ENCODE measurements at regions of chr19 and their contacts with region 1.

Region 1: DNA sequence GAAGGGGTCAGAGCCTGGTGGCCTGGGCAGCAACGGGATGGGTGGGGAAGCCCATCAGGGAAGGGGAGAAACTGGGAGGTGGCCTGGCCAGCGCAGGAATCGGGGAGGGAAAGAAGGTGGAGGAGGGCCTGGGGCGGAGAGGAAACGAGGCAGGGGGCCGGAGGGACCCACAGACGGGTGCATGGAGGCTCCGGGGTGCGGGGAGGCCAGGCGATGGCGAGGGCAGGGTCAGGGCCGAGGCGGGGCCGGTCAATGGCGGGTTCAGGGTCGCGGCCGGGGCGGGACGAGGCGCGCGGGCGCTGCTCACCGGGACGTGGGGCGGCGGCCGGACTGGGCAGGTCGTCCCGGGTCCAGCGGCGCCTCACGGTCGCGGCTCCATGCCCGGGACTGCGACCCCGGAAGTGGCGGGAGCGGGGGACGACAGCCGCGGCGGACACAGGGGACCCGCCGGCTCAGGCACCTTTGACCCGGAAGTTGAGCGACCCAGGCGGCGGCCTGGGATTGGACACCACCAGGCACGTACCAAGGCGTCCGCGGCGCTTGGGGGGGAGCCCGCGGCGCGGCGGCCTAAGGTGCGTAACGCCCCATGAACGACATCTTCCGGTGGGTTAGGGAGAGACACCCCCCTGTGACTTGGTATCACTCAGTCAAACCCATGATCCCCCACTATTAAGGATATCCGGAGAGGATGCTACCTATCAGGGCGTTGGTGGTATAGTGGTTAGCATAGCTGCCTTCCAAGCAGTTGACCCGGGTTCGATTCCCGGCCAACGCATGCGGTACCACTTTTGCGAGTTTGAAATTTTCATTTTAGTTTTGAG is at the start of gene DPP9:
- DNase-seq: peak; percentile 100
- H3K4me3 ChIP-seq: peak within 1 kb of the TSS; percentile 73 to 99
- H3K27ac ChIP-seq: peak within 1 kb of the TSS; percentile 44 to 68
- H3K4me1 ChIP-seq: peaks cover 8 to 12% of the 10 kb centered on the region in 2 experiments; a peak in 3 of 4 replicates
- H3K27me3 ChIP-seq: no peaks in the 10 kb centered on the region
- CTCF ChIP-seq: no peak
- EP300 ChIP-seq: peak; percentile 58 to 62; a peak in 2 of 4 replicates
- RAD21 ChIP-seq: no peak
- polyA plus RNA-seq, gene DPP9: 10.5 and 17.1 TPM in 2 replicates

Region 2: DNA sequence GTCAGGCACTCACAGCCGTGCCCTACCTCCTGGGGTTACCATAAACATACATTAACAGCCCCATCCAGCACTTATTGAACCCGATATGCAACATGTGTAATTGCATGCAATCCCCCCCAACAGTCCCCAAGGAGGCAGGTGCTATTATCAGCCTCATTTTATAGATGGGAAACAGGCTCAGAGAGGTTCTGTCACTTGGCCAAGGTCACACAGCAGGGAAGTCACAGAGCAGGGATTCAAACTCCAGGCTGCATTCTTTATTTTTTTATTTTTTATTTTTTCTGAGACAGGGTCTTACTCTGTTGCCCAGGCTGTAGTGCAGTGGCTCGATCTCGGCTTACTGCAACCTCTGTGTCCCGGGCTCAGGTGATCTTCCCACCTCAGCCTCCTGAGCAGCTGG is 122.7 kb before region 1 on chr19:
- CTCF ChIA-PET with region 1: no interaction called
- POLR2A ChIA-PET with region 1: no interaction called
- DNase-seq: no peak
- H3K4me3 ChIP-seq: no peak overlapping the region
- H3K27ac ChIP-seq: no peak overlapping the region
- H3K4me1 ChIP-seq: peaks cover 0 to 3% of the 10 kb centered on the region in 2 experiments; a peak in 1 of 4 replicates
- H3K27me3 ChIP-seq: peaks cover 21% of the 10 kb centered on the region; the same call in 1 of the 2 replicates
- CTCF ChIP-seq: no peak
- EP300 ChIP-seq: no peak
- RAD21 ChIP-seq: no peak

Region 3: DNA sequence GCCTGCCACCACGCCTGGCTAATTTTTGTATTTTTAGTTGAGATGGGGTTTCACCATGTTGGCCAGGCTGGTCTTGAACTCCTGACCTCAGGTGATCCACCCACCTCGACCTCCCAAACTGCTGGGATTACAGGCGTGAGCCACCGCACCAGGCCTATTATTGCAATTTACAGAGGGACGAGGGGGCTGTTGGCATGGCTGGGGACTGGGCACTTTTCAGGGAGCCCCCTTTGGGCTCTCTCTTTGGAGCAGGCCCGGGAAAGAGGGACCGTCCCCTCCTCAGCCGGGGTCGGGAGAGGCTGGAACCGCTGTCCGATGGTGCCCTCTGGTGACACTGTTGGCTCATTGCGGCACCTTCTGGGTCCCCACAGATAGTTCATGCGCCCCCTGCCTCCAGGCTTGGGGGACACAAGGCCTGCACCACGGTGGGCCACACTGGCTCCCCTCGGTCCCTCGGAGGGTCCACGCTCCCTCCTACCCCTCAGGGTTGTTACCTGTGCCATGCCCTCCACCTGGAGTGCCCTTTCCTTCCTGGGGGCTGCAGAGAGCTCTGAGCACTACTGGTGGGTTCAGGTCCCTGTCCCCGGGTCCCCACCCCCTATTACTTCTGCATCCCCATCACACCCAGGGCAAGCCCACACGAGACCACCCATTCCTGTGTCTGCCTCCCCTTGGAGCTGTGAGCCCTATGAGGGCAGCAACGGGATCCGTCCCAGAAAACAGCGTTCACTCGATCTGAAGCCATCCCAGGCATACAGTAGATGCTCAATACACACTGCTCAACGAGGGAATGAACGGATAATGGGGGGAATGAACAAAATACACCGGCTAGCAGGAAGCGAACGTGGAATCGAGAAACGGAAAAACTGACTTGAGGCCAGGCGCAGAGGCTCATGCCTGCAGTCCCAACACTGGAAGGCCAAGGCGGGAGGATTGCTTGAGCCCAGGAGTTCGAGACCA is 80.4 kb after region 1 on chr19:
- CTCF ChIA-PET with region 1: interaction called, 15 read pairs
- POLR2A ChIA-PET with region 1: no interaction called
- DNase-seq: peak; percentile 90
- H3K4me3 ChIP-seq: peak overlapping the region in 1 of 2 experiments; percentile 23; a peak in 1 of 4 replicates
- H3K27ac ChIP-seq: no peak overlapping the region
- H3K4me1 ChIP-seq: no peaks in the 10 kb centered on the region
- H3K27me3 ChIP-seq: no peaks in the 10 kb centered on the region
- CTCF ChIP-seq: peak; percentile 77
- EP300 ChIP-seq: no peak
- RAD21 ChIP-seq: peak; percentile 82